Uterus (tissue), 4 donors: ENCODE measurements at regions of chr4 and their contacts with region 1.

Region 1: GRCh38 chr4:127622921-127623656 is 9.7 kb upstream of the INTU start:
- DNase-seq: peak in 1 of 2 donors; percentile 29
- H3K4me3 ChIP-seq: peak overlapping the region; percentile 25 to 37
- H3K27ac ChIP-seq: peak overlapping the region in 1 of 2 donors; percentile 10
- H3K4me1 ChIP-seq: no peaks in the 10 kb centered on the region
- H3K27me3 ChIP-seq: peaks cover 0 to 19% of the 10 kb centered on the region in 2 donors
- CTCF ChIP-seq: peak in 1 of 4 experiments; percentile 23
- POLR2A ChIP-seq: no peak

Region 2: DNA sequence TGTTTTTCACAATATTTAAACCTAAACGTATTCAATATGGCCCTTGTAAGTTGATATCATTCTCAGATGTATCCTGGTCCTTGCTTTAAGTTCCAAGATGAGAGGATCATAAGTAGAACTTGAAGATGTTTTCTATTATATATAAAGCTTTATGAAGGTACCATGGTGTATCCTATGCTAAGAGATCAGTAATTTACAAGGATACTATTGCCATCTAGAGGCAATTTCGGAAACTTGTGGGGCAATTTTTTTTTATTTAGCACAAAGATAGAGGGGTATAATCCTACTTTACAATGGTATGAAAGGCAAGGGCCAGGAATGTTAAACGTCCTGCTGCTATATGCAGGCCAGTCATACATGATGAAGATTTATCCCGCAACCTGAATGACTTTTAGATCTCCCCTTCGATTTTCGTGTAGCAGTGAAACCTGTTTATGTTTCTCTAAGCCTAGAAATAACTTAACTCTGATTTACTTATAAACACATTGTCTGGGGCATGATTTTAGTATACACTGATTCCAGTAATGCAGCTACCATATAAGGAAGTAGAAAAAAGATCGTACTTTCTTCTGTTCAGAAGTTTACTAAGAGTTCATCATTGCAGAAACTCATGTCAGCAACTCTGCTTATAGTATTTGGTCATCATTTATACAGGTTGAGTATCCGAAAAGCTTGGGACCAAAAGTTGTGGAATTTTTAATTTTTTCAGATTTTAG is 109.7 kb after region 1 on chr4:
- intact Hi-C with region 1: loop called (anchors 10 kb)
- DNase-seq: no peak
- H3K4me3 ChIP-seq: no peak overlapping the region
- H3K27ac ChIP-seq: no peak overlapping the region
- H3K4me1 ChIP-seq: no peaks in the 10 kb centered on the region
- H3K27me3 ChIP-seq: no peaks in the 10 kb centered on the region
- CTCF ChIP-seq: peak; percentile 47 to 61 (median 51)
- POLR2A ChIP-seq: no peak